Activated naive CD4-positive, alpha-beta T cell treated with anti-CD3 and anti-CD28 coated beads for 36 hours (primary cell): ENCODE measurements at regions of chr1 and their contacts with region 1.

Region 1: GRCh38 chr1:145891587-145892485 is 6.2 kb upstream of the ANKRD35 start:
- DNase-seq: peak; percentile 80
- H3K4me3 Mint-ChIP-seq: no peak overlapping the region
- H3K27ac Mint-ChIP-seq: no peak overlapping the region
- H3K4me1 Mint-ChIP-seq: peaks cover 1% of the 10 kb centered on the region
- H3K27me3 Mint-ChIP-seq: no peaks in the 10 kb centered on the region

Region 2: DNA sequence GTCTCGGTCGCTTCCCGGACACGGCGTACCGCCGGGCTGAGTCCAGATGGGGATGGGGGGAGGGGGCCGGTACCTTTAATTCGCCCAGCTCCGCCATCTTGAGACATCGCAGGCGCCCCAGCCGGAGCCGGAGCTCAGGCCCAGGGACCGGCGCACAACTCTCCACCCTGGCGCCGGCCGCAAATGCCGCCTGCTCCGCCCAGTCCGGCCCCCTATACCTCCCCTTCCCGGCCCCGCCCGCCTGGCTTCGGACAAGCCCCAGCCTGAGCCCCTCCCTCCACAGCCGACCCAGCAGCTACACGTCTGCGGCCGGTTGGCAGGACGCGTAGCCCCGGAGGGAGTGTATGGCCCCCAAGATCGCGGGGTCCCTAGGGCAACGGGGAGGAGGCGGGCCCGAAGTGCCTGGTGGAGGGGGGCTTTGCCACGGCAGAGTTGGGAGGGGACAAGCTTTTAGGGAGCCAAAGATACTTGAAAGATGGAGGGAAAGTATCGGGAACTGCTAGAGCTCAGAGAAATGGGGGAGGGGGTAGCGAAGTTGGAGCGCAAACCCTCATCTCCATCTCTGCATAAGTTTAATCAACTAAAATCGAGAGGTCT is 32.8 kb before region 1 on chr1 and contains the start of gene PIAS3:
- CTCF ChIA-PET with region 1: interaction called, 11 read pairs
- intact Hi-C with region 1: no loop called
- DNase-seq: peak; percentile 84
- H3K4me3 Mint-ChIP-seq: peak within 1 kb of the TSS; percentile 87
- H3K27ac Mint-ChIP-seq: peak within 1 kb of the TSS; percentile 83
- H3K4me1 Mint-ChIP-seq: peaks cover 9% of the 10 kb centered on the region
- H3K27me3 Mint-ChIP-seq: no peaks in the 10 kb centered on the region
- total RNA-seq, gene PIAS3: 19.1 to 19.6 TPM

Region 3: GRCh38 chr1:145879775-145880174 is 12.1 kb before region 1 on chr1:
- CTCF ChIA-PET with region 1: interaction called, 23 read pairs
- intact Hi-C with region 1: no loop called
- DNase-seq: no peak
- H3K4me3 Mint-ChIP-seq: no peak overlapping the region
- H3K27ac Mint-ChIP-seq: no peak overlapping the region
- H3K4me1 Mint-ChIP-seq: peaks cover 1% of the 10 kb centered on the region
- H3K27me3 Mint-ChIP-seq: peaks cover 12% of the 10 kb centered on the region

Region 4: GRCh38 chr1:145906954-145907753 is 15.3 kb after region 1 on chr1:
- CTCF ChIA-PET with region 1: interaction called, 19 read pairs
- intact Hi-C with region 1: no loop called
- DNase-seq: no peak
- H3K4me3 Mint-ChIP-seq: no peak overlapping the region
- H3K27ac Mint-ChIP-seq: no peak overlapping the region
- H3K4me1 Mint-ChIP-seq: peaks cover 5% of the 10 kb centered on the region
- H3K27me3 Mint-ChIP-seq: no peaks in the 10 kb centered on the region

Region 5: DNA sequence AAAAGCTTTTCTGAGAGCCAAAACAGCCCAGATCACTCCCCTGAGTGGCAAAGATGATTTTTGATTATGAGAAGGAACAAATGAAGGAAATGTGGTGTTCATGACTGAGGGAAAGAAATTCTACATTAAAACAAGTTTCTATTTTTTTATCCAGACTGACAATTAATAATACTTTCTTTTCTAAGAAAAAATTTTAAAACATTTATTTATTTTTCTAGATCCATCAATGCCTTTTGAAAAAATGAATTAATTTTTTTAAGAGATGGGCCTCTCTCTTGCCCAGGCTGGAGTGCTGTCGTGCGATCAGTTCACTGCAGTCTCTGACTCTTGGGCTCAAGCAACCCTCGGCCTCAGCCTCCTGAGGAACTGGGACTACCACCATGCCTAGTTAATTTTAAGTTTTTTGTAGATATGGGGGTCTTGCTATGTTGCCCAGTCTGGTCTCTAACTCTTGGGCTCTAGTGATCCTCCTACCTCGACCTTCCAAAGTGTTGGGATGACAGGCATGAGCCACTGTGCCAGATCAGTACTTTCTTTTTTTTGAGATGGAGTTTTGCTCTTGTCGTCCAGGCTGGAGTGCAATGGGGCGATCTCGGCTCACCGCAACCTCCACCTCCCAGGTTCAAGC is 115.8 kb after region 1 on chr1:
- CTCF ChIA-PET with region 1: interaction called, 23 read pairs
- intact Hi-C with region 1: no loop called
- DNase-seq: no peak
- H3K4me3 Mint-ChIP-seq: no peak overlapping the region
- H3K27ac Mint-ChIP-seq: peak overlapping the region; percentile 93
- H3K4me1 Mint-ChIP-seq: peaks cover 38% of the 10 kb centered on the region
- H3K27me3 Mint-ChIP-seq: no peaks in the 10 kb centered on the region

Region 6: GRCh38 chr1:146012737-146013403 is 121.0 kb after region 1 on chr1:
- CTCF ChIA-PET with region 1: interaction called, 23 read pairs
- intact Hi-C with region 1: loop called (anchors 1 kb)
- DNase-seq: peak; percentile 84
- H3K4me3 Mint-ChIP-seq: no peak overlapping the region
- H3K27ac Mint-ChIP-seq: no peak overlapping the region
- H3K4me1 Mint-ChIP-seq: peaks cover 5% of the 10 kb centered on the region
- H3K27me3 Mint-ChIP-seq: peaks cover 7% of the 10 kb centered on the region

Region 7: DNA sequence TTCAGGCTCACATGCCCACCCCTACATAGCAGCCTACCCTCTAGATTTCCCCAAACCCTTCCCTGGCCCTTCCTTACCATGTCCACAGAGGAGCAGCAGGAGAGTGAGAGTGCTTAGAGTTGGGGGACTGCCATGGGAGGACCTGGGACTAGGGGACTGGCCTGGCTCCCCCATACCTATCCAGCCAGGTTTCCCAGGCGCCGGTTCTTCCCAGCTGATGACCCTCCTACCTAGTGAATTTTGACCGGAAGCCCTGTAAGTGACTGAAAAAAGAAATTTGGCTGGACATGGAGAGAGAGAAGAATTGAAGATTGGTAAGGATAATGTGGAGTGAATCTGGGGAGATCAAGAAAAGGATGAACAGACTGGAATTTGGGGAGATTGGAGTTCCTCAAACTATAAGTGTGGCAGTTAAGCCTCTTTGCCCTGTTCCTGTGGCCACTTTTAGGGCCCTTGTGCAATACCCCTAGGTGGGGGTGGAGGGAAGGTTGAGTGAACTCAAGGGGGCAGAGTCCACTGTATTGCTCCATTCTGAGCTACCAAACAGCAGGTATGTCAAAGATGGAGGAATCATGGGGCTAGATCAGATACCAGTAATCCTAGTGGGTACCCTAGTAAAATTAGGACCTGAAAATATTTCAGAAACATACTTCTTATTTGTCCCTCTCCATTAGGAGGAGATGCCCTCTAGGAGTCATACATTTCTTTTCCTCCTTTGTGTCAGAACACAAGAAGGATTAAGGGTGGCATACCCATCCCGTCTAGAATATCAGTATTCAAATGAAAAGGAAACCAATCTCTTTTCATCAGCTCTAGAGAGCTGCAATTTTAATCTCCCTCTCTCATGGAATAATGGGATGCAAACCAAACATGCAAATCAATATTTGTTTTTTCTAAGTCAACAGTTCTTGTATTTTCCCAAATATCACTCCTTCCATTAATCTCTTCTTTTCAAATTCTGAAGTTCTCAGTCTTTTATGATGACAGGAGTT is 128.5 kb after region 1 on chr1:
- CTCF ChIA-PET with region 1: interaction called, 22 read pairs
- intact Hi-C with region 1: no loop called
- DNase-seq: no peak
- H3K4me3 Mint-ChIP-seq: no peak overlapping the region
- H3K27ac Mint-ChIP-seq: no peak overlapping the region
- H3K4me1 Mint-ChIP-seq: peaks cover 8% of the 10 kb centered on the region
- H3K27me3 Mint-ChIP-seq: peaks cover 34% of the 10 kb centered on the region